WTC11 (cell line): ENCODE measurements at regions of chr17 and their contacts with region 1.

Region 1: DNA sequence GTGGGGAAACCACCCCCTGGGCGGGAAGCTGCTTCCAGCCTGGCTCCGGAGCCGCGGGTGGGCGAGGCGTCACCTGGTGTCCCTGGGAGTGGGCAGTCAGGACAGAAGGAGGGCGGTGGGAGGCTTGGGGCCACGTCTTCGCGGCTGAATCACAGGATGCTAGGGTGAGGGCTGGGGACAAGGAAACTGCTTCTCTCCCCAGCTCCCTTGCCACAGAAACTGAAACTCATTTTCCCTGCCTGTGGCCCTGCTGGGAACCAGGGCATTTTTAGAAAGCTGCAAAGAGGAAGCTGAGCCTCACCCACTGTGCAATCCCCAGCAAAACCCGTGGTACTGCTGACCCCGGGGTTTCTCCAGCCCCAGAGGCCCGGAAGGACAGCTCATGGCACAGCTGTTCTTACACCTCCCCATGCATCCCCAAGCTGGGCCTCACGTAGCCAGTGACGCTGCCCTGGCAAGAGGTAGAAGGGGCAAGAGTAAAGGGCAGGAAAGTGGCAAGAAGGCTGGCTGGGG is 8.2 kb downstream of the RHBDF2 start:
- DNase-seq: no peak
- ATAC-seq: no peak; the same call in 1 of the 2 replicates
- H3K4me3 Mint-ChIP-seq: no peak overlapping the region
- H3K27ac Mint-ChIP-seq: peak overlapping the region; percentile 78; the same call in 1 of the 2 replicates
- H3K4me1 Mint-ChIP-seq: peaks cover 25% of the 10 kb centered on the region
- H3K27me3 Mint-ChIP-seq: no peaks in the 10 kb centered on the region
- CTCF ChIP-seq: no peak

Region 2: GRCh38 chr17:76337413-76337777 is 155.7 kb before region 1 on chr17:
- CTCF ChIA-PET with region 1: no interaction called
- POLR2A ChIA-PET with region 1: no interaction called
- DNase-seq: no peak
- ATAC-seq: no peak
- H3K4me3 Mint-ChIP-seq: no peak overlapping the region
- H3K27ac Mint-ChIP-seq: no peak overlapping the region; the same call in 1 of the 2 replicates
- H3K4me1 Mint-ChIP-seq: peaks cover 6% of the 10 kb centered on the region; the same call in 1 of the 2 replicates
- H3K27me3 Mint-ChIP-seq: no peaks in the 10 kb centered on the region
- CTCF ChIP-seq: no peak

Region 3: GRCh38 chr17:76506408-76507349 is 13.6 kb after region 1 on chr17:
- CTCF ChIA-PET with region 1: interaction called, 10 read pairs
- POLR2A ChIA-PET with region 1: no interaction called
- DNase-seq: peak; percentile 94
- ATAC-seq: peak; percentile 80
- H3K4me3 Mint-ChIP-seq: peak overlapping the region; percentile 25
- H3K27ac Mint-ChIP-seq: no peak overlapping the region
- H3K4me1 Mint-ChIP-seq: peaks cover 12% of the 10 kb centered on the region
- H3K27me3 Mint-ChIP-seq: peaks cover 21% of the 10 kb centered on the region
- CTCF ChIP-seq: peak; percentile 92

Region 4: GRCh38 chr17:76645481-76645880 is 152.4 kb after region 1 on chr17:
- CTCF ChIA-PET with region 1: no interaction called
- POLR2A ChIA-PET with region 1: no interaction called
- DNase-seq: no peak
- ATAC-seq: no peak
- H3K4me3 Mint-ChIP-seq: no peak overlapping the region
- H3K27ac Mint-ChIP-seq: no peak overlapping the region
- H3K4me1 Mint-ChIP-seq: peaks cover 8% of the 10 kb centered on the region
- H3K27me3 Mint-ChIP-seq: no peaks in the 10 kb centered on the region; the same call in 1 of the 2 replicates
- CTCF ChIP-seq: no peak